ENCODE measurements at regions of chr4 and their contacts with region 1.

Region 1: GRCh38 chr4:8192748-8193738 is 6.0 kb upstream of the SH3TC1 start:
- DNase-seq: peak; percentile 30 to 59
- ATAC-seq: peak; percentile 62 to 88 (median 85)
- H3K4me3 ChIP-seq: no peak overlapping the region
- H3K4me3 Mint-ChIP-seq: no peak overlapping the region
- H3K27ac ChIP-seq: peak overlapping the region; percentile 18
- H3K27ac Mint-ChIP-seq: peak overlapping the region in 1 of 2 donors; percentile 15
- H3K4me1 ChIP-seq: peaks cover 20% of the 10 kb centered on the region
- H3K4me1 Mint-ChIP-seq: peaks cover 20 to 29% of the 10 kb centered on the region in 2 donors
- H3K27me3 ChIP-seq: no peaks in the 10 kb centered on the region
- H3K27me3 Mint-ChIP-seq: peaks cover 0 to 10% of the 10 kb centered on the region in 2 donors
- CTCF ChIP-seq: no peak

Region 2: GRCh38 chr4:8181844-8182243 is 11.2 kb before region 1 on chr4:
- intact Hi-C with region 1: loop called (anchors 1 kb)
- DNase-seq: no peak
- ATAC-seq: no peak
- H3K4me3 ChIP-seq: no peak overlapping the region
- H3K4me3 Mint-ChIP-seq: no peak overlapping the region
- H3K27ac ChIP-seq: no peak overlapping the region
- H3K27ac Mint-ChIP-seq: no peak overlapping the region
- H3K4me1 ChIP-seq: no peaks in the 10 kb centered on the region
- H3K4me1 Mint-ChIP-seq: peaks cover 0 to 3% of the 10 kb centered on the region in 2 donors
- H3K27me3 ChIP-seq: no peaks in the 10 kb centered on the region
- H3K27me3 Mint-ChIP-seq: peaks cover 0 to 3% of the 10 kb centered on the region in 2 donors
- CTCF ChIP-seq: no peak

Region 3: GRCh38 chr4:8419181-8420041 is 226.4 kb after region 1 on chr4:
- intact Hi-C with region 1: no loop called
- DNase-seq: peak in 1 of 2 donors; percentile 60
- ATAC-seq: peak; percentile 45 to 76 (median 64)
- H3K4me3 ChIP-seq: no peak overlapping the region
- H3K4me3 Mint-ChIP-seq: no peak overlapping the region
- H3K27ac ChIP-seq: no peak overlapping the region
- H3K27ac Mint-ChIP-seq: no peak overlapping the region
- H3K4me1 ChIP-seq: peaks cover 3% of the 10 kb centered on the region
- H3K4me1 Mint-ChIP-seq: peaks cover 4 to 8% of the 10 kb centered on the region in 2 donors
- H3K27me3 ChIP-seq: no peaks in the 10 kb centered on the region
- H3K27me3 Mint-ChIP-seq: no peaks in the 10 kb centered on the region
- CTCF ChIP-seq: no peak